PC-3 (cell line): ENCODE measurements at regions of chr3 and their contacts with region 1.

Region 1: GRCh38 chr3:33980252-33980651 is 181.8 kb downstream of the PDCD6IP start:
- DNase-seq: peak; percentile 84
- ATAC-seq: peak; percentile 99
- H3K4me3 ChIP-seq: no peak overlapping the region
- H3K27ac ChIP-seq: no peak overlapping the region
- H3K4me1 ChIP-seq: no peaks in the 10 kb centered on the region
- H3K27me3 ChIP-seq: no peaks in the 10 kb centered on the region
- CTCF ChIP-seq: peak; percentile 91

Region 2: GRCh38 chr3:33883538-33883950 is 96.7 kb before region 1 on chr3:
- CTCF ChIA-PET with region 1: interaction called, 5 read pairs
- POLR2A ChIA-PET with region 1: no interaction called
- intact Hi-C with region 1: loop called (anchors 5 kb)
- DNase-seq: peak; percentile 85
- ATAC-seq: peak; percentile 41
- H3K4me3 ChIP-seq: no peak overlapping the region
- H3K27ac ChIP-seq: no peak overlapping the region
- H3K4me1 ChIP-seq: no peaks in the 10 kb centered on the region
- H3K27me3 ChIP-seq: no peaks in the 10 kb centered on the region
- CTCF ChIP-seq: peak; percentile 96

Region 3: DNA sequence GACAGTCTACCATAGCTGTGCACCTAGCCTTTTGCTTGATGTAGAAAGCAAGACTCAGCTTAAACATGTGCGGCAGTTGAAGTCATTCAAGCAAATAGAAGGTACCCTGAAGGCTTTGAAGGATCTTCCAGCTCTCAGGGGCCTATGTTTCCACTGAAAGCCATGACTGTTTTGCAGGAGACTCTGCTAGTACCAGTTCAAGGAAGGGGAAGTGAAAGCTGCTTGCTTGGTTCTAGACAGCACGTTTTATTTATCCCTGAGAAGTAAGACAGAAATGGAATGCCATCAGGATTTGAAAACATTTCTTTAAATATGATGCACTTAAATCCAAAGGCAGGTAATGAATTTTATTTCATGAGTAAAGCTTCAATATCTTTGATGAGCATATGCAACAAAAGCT is 129.6 kb after region 1 on chr3:
- CTCF ChIA-PET with region 1: no interaction called
- POLR2A ChIA-PET with region 1: no interaction called
- intact Hi-C with region 1: loop called (anchors 1 kb)
- DNase-seq: no peak
- ATAC-seq: no peak
- H3K4me3 ChIP-seq: no peak overlapping the region
- H3K27ac ChIP-seq: no peak overlapping the region
- H3K4me1 ChIP-seq: peaks cover 7% of the 10 kb centered on the region
- H3K27me3 ChIP-seq: no peaks in the 10 kb centered on the region
- CTCF ChIP-seq: no peak

Region 4: GRCh38 chr3:34260271-34261006 is 280.2 kb after region 1 on chr3:
- CTCF ChIA-PET with region 1: interaction called, 7 read pairs
- POLR2A ChIA-PET with region 1: no interaction called
- intact Hi-C with region 1: loop called (anchors 1 kb)
- DNase-seq: peak; percentile 62
- ATAC-seq: peak; percentile 76; the same call in 1 of the 2 replicates
- H3K4me3 ChIP-seq: no peak overlapping the region
- H3K27ac ChIP-seq: no peak overlapping the region
- H3K4me1 ChIP-seq: no peaks in the 10 kb centered on the region
- H3K27me3 ChIP-seq: 0 out of 2 replicates have a peak, but pooled peaks cover 2% of the 10 kb centered on the region
- CTCF ChIP-seq: peak; percentile 74

Region 5: DNA sequence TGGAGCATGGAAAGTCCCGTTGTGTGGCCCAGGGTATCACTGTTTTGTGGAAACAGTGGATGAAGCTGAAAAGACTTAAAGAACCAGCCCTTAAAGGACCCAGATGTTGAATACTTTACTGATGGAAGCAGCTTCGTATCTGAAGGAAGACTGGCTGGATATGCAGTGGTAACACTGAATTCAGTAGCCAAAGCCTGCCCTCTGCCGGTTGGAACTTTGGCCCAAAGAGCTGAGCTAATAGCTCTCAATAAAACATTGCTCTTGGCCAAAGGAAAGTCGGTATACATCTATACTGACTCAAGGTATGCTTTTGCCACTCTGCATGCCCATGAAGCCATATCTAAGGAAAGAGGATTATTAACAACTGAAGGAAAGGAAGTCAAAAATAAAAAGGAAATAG is 703.6 kb after region 1 on chr3:
- CTCF ChIA-PET with region 1: interaction called, 14 read pairs
- POLR2A ChIA-PET with region 1: no interaction called
- intact Hi-C with region 1: loop called (anchors 1 kb)
- DNase-seq: peak; percentile 71
- ATAC-seq: peak; percentile 93
- H3K4me3 ChIP-seq: no peak overlapping the region
- H3K27ac ChIP-seq: no peak overlapping the region
- H3K4me1 ChIP-seq: no peaks in the 10 kb centered on the region
- H3K27me3 ChIP-seq: no peaks in the 10 kb centered on the region
- CTCF ChIP-seq: peak; percentile 75

Region 6: GRCh38 chr3:35908366-35909232 is 1928.3 kb after region 1 on chr3:
- CTCF ChIA-PET with region 1: no interaction called
- POLR2A ChIA-PET with region 1: no interaction called
- intact Hi-C with region 1: loop called (anchors 1 kb)
- DNase-seq: peak; percentile 86
- ATAC-seq: peak; percentile 86
- H3K4me3 ChIP-seq: no peak overlapping the region
- H3K27ac ChIP-seq: no peak overlapping the region
- H3K4me1 ChIP-seq: no peaks in the 10 kb centered on the region
- H3K27me3 ChIP-seq: no peaks in the 10 kb centered on the region
- CTCF ChIP-seq: peak; percentile 91